Uterus (tissue), 4 donors: ENCODE measurements at regions of chr1 and their contacts with region 1.

Region 1: GRCh38 chr1:209250861-209251637 is 332.5 kb upstream of the CAMK1G start:
- DNase-seq: no peak
- H3K4me3 ChIP-seq: no peak overlapping the region
- H3K27ac ChIP-seq: no peak overlapping the region
- H3K4me1 ChIP-seq: no peaks in the 10 kb centered on the region
- H3K27me3 ChIP-seq: no peaks in the 10 kb centered on the region
- CTCF ChIP-seq: no peak
- POLR2A ChIP-seq: no peak

Region 2: DNA sequence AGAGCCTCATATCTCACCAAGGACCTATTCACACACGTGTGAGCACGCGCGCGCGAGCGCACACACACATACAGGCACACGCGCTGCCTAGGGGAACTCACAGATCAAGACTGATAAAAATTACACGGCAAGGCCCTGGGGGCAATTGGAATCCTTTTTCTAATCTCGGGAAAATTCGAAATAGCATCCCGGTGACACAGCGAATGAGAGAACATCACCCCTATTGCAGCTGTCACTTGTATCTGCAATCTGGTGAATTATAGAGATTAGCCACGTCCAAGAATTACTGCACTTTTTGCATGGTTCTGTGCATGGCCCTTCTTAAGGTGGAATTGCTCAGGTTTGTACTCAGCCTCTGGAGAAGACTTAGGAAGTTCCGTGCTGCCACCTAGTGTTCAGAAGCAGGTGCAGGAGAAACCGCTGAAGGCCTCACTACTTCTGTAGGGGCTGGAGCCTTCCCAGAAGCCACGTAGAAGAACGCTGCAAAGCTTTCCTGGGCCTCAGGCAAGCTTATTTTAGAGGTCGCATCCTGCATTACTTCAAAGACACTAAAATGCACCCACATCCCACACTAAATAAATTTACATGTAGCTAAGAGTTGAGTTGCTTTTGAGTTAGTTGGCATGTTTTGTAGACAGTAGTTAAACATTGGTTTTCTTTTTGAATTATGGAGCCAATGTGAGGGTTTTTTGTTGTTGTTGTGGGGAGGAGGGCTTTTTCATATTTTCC is 103.2 kb after region 1 on chr1:
- intact Hi-C with region 1: loop called (anchors 10 kb)
- DNase-seq: peak; percentile 70 to 88
- H3K4me3 ChIP-seq: no peak overlapping the region
- H3K27ac ChIP-seq: no peak overlapping the region
- H3K4me1 ChIP-seq: no peaks in the 10 kb centered on the region
- H3K27me3 ChIP-seq: no peaks in the 10 kb centered on the region
- CTCF ChIP-seq: peak; percentile 65 to 80 (median 74)
- POLR2A ChIP-seq: no peak

Region 3: DNA sequence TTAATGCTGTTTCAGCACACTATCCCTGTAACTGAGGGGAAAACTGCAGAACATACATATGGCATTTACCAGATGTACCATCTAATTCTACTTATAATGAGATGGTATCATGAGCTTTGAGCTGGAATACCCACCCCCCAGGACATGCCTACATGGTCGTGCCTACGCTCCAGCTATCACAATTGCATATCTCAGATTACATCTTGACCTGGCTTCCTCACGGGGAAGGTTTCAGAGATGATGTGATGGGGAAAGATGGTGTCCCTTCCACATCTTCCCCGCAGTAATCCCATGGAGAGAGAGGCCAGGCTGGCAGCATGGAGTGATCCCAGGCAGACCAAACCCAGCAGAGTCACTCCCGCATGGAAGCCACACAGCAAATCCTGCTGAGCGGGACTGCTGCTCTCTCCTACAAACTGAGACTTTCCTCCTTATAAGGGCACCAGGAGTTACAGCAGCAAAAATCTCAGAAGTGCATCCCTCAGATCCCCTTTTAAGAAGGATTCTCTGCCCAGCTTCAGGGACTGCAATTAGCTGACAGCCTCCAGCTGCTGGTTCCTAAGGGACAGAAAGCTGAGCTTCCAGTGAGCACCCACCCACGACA is 1815.8 kb after region 1 on chr1:
- intact Hi-C with region 1: no loop called
- DNase-seq: no peak
- H3K4me3 ChIP-seq: no peak overlapping the region
- H3K27ac ChIP-seq: no peak overlapping the region
- H3K4me1 ChIP-seq: no peaks in the 10 kb centered on the region
- H3K27me3 ChIP-seq: no peaks in the 10 kb centered on the region
- CTCF ChIP-seq: no peak
- POLR2A ChIP-seq: no peak